ENCODE measurements at regions of chr18 and their contacts with region 1.

Region 1: GRCh38 chr18:46481048-46481846 is 175.8 kb downstream of the LOXHD1 start:
- DNase-seq: peak; percentile 56

Region 2: GRCh38 chr18:46281185-46282176 is 199.8 kb before region 1 on chr18:
- intact Hi-C with region 1: loop called (anchors 5 to 10 kb)
- DNase-seq: peak; percentile 86